ENCODE measurements at regions of chr20 and their contacts with region 1.

Region 1: GRCh38 chr20:2767768-2768631 is 32.4 kb downstream of the CPXM1 start:
- DNase-seq: peak; percentile 64
- ATAC-seq: peak; percentile 85 to 95

Region 2: GRCh38 chr20:2859330-2860121 is 91.5 kb after region 1 on chr20:
- intact Hi-C with region 1: loop called in 1 of 2 experiments (anchors 10 kb)
- DNase-seq: no peak
- ATAC-seq: peak; percentile 79 to 82